Heart right ventricle (tissue), 16 donors: ENCODE measurements at regions of chr17 and their contacts with region 1.

Region 1: DNA sequence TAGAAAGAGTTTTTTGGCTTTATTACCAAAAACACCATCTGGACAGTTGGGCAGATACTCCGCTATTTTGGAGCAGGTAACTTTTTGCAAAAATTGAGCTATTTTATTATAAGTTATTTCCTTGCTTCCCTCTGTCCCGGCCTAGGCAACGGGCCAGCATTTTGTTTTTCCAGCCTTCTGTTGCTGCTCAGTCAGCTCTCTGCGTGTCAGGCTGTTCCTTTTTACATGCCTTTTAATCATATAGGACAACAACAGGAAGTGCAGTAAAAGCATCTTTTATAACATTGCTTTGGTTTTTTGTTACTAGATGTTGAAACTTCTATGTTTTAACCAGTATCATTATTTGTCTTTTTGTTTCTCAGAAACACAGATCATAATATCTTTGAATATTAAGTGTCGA is 30.4 kb downstream of the PPM1D start:
- DNase-seq: peak in 1 of 2 donors; percentile 27
- ATAC-seq: no peak
- H3K4me3 ChIP-seq: no peak overlapping the region
- H3K27ac ChIP-seq: peak overlapping the region in 1 of 10 donors; percentile 32
- H3K4me1 ChIP-seq: peaks cover 0 to 13% (median 0%) of the 10 kb centered on the region in 9 donors
- H3K27me3 ChIP-seq: no peaks in the 10 kb centered on the region
- CTCF ChIP-seq: no peak

Region 2: GRCh38 chr17:60421273-60421934 is 208.9 kb before region 1 on chr17:
- intact Hi-C with region 1: loop called in 2 of 10 experiments (anchors 5 to 10 kb)
- DNase-seq: peak; percentile 56 to 76
- ATAC-seq: peak; percentile 92 to 97 (median 95)
- H3K4me3 ChIP-seq: peak overlapping the region; percentile 36 to 62 (median 54)
- H3K27ac ChIP-seq: peak overlapping the region in 5 of 10 donors; percentile 12 to 85 (median 47)
- H3K4me1 ChIP-seq: peaks cover 0 to 22% (median 13%) of the 10 kb centered on the region in 9 donors
- H3K27me3 ChIP-seq: no peaks in the 10 kb centered on the region
- CTCF ChIP-seq: peak; percentile 69 to 99 (median 94)

Region 3: DNA sequence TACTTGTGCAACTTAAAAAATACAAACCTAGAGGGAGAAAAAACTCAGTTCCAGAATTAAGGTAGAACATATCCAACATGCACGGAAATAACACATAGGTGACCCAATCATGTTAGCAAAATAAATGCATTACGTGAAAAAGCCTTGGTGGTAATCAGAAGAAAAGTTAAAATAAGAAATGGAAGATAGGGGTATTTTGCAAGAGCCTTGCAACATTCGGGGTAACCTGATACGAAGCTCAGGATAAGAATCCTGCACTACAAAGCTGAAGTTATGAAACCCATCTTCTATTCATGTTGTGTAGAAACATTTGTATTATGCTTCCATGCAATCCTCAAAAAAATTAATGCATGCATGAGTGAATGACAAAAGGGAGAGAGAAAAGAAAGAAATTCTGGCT is 175.0 kb before region 1 on chr17:
- intact Hi-C with region 1: loop called in 4 of 10 experiments (anchors 10 kb)
- DNase-seq: no peak
- ATAC-seq: no peak
- H3K4me3 ChIP-seq: no peak overlapping the region
- H3K27ac ChIP-seq: no peak overlapping the region
- H3K4me1 ChIP-seq: no peaks in the 10 kb centered on the region
- H3K27me3 ChIP-seq: no peaks in the 10 kb centered on the region
- CTCF ChIP-seq: no peak

Region 4: DNA sequence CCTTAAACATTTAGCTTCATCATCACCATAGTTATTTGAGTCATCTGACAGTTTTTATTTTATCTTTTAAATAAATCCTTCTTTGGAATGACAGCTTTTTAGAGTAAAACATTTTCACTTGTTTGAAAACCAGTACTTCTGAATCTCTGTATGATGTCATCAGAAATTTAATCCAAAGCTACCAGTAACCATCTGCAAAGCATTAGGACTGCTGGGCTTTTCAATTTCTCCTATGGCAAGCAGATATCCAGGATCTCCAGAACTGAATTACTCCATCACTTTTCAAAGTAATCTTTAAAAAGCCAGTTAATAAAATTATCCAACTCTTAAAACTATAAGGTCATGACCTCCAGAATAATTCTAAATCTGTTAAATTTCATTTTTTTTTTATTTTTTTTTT is 156.6 kb before region 1 on chr17:
- intact Hi-C with region 1: loop called in 4 of 10 experiments (anchors 10 kb)
- DNase-seq: no peak
- ATAC-seq: no peak
- H3K4me3 ChIP-seq: no peak overlapping the region
- H3K27ac ChIP-seq: no peak overlapping the region
- H3K4me1 ChIP-seq: peaks cover 0 to 23% (median 17%) of the 10 kb centered on the region in 9 donors
- H3K27me3 ChIP-seq: no peaks in the 10 kb centered on the region
- CTCF ChIP-seq: no peak

Region 5: DNA sequence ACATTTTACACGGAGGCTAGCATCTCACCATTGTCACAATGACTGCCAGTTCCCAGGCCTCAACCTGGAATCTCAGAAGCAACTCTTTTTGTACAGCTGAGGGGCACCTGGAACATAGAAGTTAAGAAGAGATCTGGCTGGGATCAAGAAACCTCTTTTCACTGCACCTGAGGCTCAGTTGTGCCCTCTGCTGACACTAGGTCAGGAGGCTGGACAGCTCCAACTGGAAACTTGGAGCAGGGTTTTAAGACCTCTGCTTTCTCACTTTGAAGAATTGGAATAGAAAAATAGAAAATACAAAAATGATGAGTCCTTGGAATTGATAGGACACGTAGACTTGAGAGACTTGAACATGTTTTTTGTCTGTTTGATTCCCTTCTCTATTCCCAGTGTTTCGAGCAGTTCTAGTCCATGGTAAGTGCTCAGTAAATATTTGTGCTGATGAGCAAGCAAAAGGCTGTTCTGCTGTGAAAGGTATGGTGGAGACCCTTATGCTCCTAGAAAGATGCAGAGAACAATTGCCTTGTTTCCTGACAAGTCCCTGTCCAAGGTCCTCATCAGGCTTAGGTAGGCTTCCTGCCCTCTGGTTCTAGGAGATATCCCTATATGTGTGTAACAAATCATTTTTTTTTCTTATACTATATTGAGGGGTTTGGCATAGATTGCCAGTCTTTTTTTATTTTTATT is 43.9 kb before region 1 on chr17:
- intact Hi-C with region 1: loop called in 2 of 10 experiments (anchors 1 to 5 kb)
- DNase-seq: no peak
- ATAC-seq: no peak
- H3K4me3 ChIP-seq: no peak overlapping the region
- H3K27ac ChIP-seq: no peak overlapping the region
- H3K4me1 ChIP-seq: no peaks in the 10 kb centered on the region
- H3K27me3 ChIP-seq: no peaks in the 10 kb centered on the region
- CTCF ChIP-seq: peak in 6 of 9 donors; percentile 12 to 44 (median 36)